Aorta (tissue), 5 donors: ENCODE measurements at regions of chr1 and their contacts with region 1.

Region 1: DNA sequence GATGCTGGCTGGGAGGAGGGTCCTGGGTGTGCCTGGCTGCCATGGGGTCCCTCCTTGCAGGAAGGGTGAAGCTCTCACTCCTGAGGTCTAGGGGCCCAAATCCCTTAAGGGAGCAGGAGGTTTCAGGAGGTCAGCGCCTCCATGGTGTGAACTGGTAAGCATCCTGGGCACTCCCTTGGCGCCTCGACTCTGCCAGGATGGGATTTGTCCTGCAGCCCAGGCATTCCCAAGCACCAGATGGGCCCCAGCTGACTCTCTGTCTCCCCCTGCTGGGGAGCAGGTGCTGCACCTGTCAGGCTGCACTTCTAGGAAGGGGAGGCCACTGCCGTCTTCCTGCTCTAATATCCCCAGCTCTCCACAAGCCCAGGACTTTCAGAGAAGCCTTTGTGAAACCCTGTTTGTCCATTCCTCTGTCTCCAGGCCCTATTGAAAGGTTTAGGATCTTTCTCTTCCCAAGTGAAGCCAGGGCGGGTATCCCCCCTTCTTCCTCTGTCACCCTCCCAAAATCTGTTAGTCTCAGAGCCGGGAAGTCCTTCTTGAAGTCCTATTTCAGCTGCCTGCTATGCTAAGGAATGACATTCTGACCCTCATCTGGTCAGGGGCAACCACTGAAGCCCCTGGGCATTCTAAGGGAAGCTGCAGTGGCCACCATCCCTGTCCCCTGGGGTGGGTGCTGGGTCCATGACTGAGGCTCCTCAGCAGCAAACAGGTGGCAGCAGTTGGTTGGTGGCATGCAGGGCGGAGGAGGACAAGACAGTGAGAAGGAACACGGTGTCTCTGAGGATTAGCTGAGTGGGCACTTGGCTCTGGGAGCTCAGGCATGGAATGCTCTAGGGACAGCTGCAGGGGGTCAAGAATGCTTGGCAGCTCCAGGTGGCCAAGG is 3.3 kb downstream of the MYBPH start:
- DNase-seq: peak; percentile 66 to 82
- ATAC-seq: no peak
- H3K4me3 ChIP-seq: no peak overlapping the region
- H3K27ac ChIP-seq: no peak overlapping the region
- H3K4me1 ChIP-seq: no peaks in the 10 kb centered on the region
- H3K27me3 ChIP-seq: no peaks in the 10 kb centered on the region

Region 2: DNA sequence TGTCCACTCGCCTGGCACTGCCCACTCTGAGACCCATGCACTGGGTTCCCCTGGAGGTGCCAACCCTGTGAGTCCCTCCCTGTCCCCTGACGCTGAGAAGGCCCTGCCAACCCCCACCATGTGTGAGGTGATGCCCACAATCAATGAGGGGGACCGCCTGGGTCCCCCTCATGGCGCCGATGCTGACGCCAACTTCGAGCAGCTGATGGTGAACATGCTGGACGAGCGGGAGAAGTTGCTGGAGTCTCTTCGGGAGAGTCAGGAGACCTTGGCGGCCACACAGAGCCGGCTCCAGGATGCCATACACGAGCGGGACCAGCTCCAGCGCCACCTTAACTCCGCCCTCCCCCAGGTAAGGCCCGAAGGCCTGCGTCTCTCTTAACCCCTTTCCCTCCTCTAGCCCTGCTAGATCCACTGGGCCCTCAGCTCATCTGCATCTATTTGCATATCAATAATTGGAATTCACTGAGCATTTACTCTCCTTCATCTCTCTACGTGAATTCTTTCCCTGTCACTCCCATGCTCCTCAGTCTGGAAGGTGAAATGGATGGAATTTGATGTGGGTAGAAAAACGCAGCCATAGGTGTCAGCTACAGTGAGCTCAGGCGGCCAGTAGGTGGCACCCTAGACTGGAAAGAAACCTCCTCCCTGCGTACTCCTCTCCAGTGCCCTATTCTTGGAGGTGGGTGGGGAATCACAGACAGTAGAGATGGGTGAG is 133.3 kb before region 1 on chr1:
- intact Hi-C with region 1: loop called (anchors 5 kb)
- DNase-seq: peak; percentile 78 to 90
- ATAC-seq: peak; percentile 85
- H3K4me3 ChIP-seq: no peak overlapping the region
- H3K27ac ChIP-seq: peak overlapping the region in 1 of 2 donors; percentile 73
- H3K4me1 ChIP-seq: no peaks in the 10 kb centered on the region
- H3K27me3 ChIP-seq: no peaks in the 10 kb centered on the region